Ovary (tissue), 10 donors: ENCODE measurements at regions of chr6 and their contacts with region 1.

Region 1: DNA sequence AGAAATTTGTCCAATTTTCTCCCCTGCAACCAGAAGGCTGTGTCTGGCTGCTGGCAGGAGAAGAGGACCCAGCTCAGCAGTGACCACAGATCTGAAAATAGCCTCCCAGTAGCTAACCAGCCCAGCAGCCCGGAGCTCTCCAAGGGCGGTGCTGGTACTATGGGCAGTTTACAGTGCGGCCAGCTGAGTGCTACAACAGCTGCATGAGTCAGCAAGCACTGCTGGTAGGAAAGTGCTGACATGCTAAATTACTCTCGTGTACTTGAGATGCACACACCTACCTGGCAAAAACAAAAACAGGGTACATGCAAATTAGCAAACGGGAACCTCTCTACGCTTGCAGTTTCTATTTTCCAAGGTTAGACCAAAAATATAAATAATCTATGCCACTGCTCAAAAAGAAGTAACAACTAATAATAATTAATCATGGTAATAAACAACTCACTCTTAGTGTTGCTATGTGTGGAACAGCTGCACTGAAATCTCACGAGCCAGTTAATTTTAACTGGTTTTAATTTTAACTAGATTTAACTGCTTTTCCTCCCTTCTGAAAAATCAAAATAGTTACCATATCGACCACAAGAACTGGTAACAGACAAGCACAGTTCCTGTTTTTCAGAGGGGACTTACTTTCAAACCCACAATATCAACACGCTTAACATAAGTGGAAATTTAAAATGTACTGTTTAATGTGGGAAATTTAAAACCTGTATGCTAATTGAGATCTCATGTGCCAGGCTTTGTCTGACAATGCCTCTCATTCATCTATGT is 10.8 kb downstream of the BACH2 start:
- DNase-seq: peak; percentile 59 to 76 (median 71)
- H3K4me3 ChIP-seq: no peak overlapping the region
- H3K27ac ChIP-seq: peak overlapping the region in 1 of 2 donors; percentile 3
- H3K4me1 ChIP-seq: peaks cover 7% of the 10 kb centered on the region
- H3K27me3 ChIP-seq: no peaks in the 10 kb centered on the region
- CTCF ChIP-seq: no peak
- EP300 ChIP-seq: no peak
- POLR2A ChIP-seq: no peak

Region 2: DNA sequence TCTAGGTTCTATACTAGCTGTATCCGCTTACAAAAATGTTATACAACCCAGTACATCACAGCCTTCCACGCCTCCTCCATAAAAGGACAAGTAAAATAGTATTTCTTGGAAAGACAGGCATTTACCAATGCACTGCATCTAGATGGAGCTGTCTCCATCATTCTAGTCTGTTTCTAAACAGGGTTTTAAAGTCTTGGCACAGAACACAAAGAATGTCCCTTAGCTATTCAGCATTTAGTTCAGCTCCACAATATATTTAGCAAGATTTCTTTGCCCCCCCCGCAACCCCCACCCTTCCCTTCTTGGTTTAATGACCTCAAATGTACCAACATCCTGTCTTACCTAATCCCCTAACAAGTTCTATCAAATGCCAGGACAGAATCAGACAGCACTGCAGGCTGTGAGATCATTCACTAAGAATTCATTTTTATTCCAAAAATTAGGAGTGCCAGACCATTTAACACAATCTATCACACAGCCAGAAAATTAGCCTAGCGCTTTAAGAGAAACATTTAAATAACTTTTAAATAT is 187.7 kb before region 1 on chr6:
- intact Hi-C with region 1: loop called in 1 of 4 experiments (anchors 10 kb)
- DNase-seq: peak; percentile 44 to 68 (median 49)
- H3K4me3 ChIP-seq: no peak overlapping the region
- H3K27ac ChIP-seq: peak overlapping the region in 1 of 2 donors; percentile 50
- H3K4me1 ChIP-seq: peaks cover 2% of the 10 kb centered on the region
- H3K27me3 ChIP-seq: no peaks in the 10 kb centered on the region
- CTCF ChIP-seq: peak in 1 of 3 donors; percentile 34
- EP300 ChIP-seq: no peak
- POLR2A ChIP-seq: no peak

Region 3: DNA sequence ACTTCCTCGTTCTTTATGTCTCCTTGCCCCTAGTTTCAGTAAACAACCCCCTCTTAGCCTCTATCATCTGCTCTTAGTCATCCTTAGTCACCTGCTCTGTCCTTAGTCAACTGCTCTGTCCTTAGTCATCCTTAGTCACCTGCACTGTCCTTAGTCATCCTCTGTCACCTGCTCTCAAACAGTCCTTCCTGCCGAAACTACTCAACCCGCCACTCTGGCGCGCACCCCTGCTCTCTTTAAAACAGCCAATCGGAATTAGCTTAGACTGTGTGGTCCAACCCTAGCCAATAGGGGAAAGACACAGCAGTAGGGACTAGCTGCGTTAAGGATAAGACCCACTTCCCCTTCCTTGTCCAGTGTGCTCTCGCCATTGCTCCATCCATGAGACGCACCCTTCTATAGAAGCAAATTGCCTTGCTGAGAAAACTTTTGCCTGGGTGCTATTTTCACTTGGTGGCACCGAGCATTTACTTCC is 63.0 kb before region 1 on chr6:
- intact Hi-C with region 1: loop called in 1 of 4 experiments (anchors 10 kb)
- DNase-seq: no peak
- H3K4me3 ChIP-seq: no peak overlapping the region
- H3K27ac ChIP-seq: no peak overlapping the region
- H3K4me1 ChIP-seq: peaks cover 8% of the 10 kb centered on the region
- H3K27me3 ChIP-seq: no peaks in the 10 kb centered on the region
- CTCF ChIP-seq: no peak
- EP300 ChIP-seq: no peak
- POLR2A ChIP-seq: no peak